GM12878 (cell line): ENCODE measurements at regions of chr1 and their contacts with region 1.

Region 1: GRCh38 chr1:78114034-78114956 is 68.5 kb downstream of the GIPC2 start:
- DNase-seq: peak; percentile 38
- ATAC-seq: peak; percentile 93
- H3K4me3 ChIP-seq: no peak overlapping the region
- H3K27ac ChIP-seq: no peak overlapping the region
- H3K4me1 ChIP-seq: peaks cover 6% of the 10 kb centered on the region
- H3K27me3 ChIP-seq: no peaks in the 10 kb centered on the region
- CTCF ChIP-seq: peak; percentile 67 to 100 (median 86); a peak in 5 of 6 replicates
- EP300 ChIP-seq: no peak
- POLR2A ChIP-seq: no peak
- RAD21 ChIP-seq: peak; percentile 99

Region 2: GRCh38 chr1:77533660-77534305 is 580.5 kb before region 1 on chr1:
- CTCF ChIA-PET with region 1: no interaction called
- POLR2A ChIA-PET with region 1: no interaction called
- RAD21 ChIA-PET with region 1: interaction called, 3 read pairs
- SMC1A ChIA-PET with region 1: interaction called, 3 read pairs
- in situ Hi-C with region 1: no loop called
- intact Hi-C with region 1: loop called (anchors 10 kb)
- DNase-seq: no peak
- ATAC-seq: peak; percentile 82
- H3K4me3 ChIP-seq: no peak overlapping the region
- H3K27ac ChIP-seq: no peak overlapping the region
- H3K4me1 ChIP-seq: peaks cover 3% of the 10 kb centered on the region; the same call in 1 of the 2 replicates
- H3K27me3 ChIP-seq: no peaks in the 10 kb centered on the region
- CTCF ChIP-seq: peak; percentile 78 to 84 (median 80)
- EP300 ChIP-seq: no peak
- POLR2A ChIP-seq: no peak
- RAD21 ChIP-seq: peak; percentile 69

Region 3: DNA sequence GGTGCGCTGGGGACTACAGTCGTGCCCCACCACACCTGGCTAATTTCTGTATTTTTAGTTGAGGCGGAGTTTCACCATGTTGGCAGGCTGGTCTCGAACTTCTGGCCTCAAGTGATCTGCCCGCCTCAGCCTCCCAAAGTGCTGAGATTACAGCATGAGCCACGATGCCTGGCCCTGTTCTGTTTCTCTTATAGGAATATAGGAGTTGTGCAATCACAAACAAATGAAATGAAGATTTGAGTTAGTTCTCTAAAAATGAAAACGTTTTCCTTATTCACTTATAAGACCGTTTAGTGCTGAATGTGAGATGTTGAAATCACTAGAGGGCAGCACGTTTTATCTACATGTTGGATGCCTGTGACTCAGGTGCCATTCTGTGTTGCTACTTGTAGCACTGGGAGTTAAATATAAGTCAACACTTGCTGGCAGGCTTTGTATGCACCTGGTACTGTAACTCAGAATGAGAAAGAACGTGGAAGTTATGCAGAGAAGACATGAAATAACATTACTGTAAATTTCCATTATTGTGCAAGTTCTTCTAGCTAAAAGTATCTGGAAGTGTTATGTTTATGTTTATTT is 289.1 kb before region 1 on chr1:
- CTCF ChIA-PET with region 1: interaction called, 40 read pairs
- POLR2A ChIA-PET with region 1: no interaction called
- RAD21 ChIA-PET with region 1: interaction called, 9 read pairs
- SMC1A ChIA-PET with region 1: interaction called, 14 read pairs
- in situ Hi-C with region 1: loop called (anchors 10 kb)
- intact Hi-C with region 1: loop called (anchors 2 kb)
- DNase-seq: peak; percentile 1
- ATAC-seq: peak; percentile 72
- H3K4me3 ChIP-seq: no peak overlapping the region
- H3K27ac ChIP-seq: no peak overlapping the region
- H3K4me1 ChIP-seq: no peaks in the 10 kb centered on the region
- H3K27me3 ChIP-seq: no peaks in the 10 kb centered on the region
- CTCF ChIP-seq: peak; percentile 11 to 39 (median 31); a peak in 4 of 6 replicates
- EP300 ChIP-seq: no peak
- POLR2A ChIP-seq: no peak
- RAD21 ChIP-seq: peak; percentile 41; the same call in 1 of the 2 replicates

Region 4: GRCh38 chr1:77978969-77979876 is 135.1 kb before region 1 on chr1 and contains the start of gene FUBP1:
- CTCF ChIA-PET with region 1: interaction called, 30 read pairs
- POLR2A ChIA-PET with region 1: no interaction called
- RAD21 ChIA-PET with region 1: interaction called, 6 read pairs
- SMC1A ChIA-PET with region 1: interaction called, 9 read pairs
- in situ Hi-C with region 1: no loop called
- intact Hi-C with region 1: loop called (anchors 2 kb)
- DNase-seq: peak; percentile 99
- ATAC-seq: peak; percentile 78
- H3K4me3 ChIP-seq: peak within 1 kb of the TSS; percentile 95
- H3K27ac ChIP-seq: peak within 1 kb of the TSS; percentile 100
- H3K4me1 ChIP-seq: no peaks in the 10 kb centered on the region; the same call in 1 of the 2 replicates
- H3K27me3 ChIP-seq: no peaks in the 10 kb centered on the region
- CTCF ChIP-seq: peak; percentile 77 to 84 (median 81)
- EP300 ChIP-seq: no peak
- POLR2A ChIP-seq: peak; percentile 96
- RAD21 ChIP-seq: peak; percentile 15; the same call in 1 of the 2 replicates
- polyA plus RNA-seq, gene FUBP1: 110 to 114 TPM

Region 5: DNA sequence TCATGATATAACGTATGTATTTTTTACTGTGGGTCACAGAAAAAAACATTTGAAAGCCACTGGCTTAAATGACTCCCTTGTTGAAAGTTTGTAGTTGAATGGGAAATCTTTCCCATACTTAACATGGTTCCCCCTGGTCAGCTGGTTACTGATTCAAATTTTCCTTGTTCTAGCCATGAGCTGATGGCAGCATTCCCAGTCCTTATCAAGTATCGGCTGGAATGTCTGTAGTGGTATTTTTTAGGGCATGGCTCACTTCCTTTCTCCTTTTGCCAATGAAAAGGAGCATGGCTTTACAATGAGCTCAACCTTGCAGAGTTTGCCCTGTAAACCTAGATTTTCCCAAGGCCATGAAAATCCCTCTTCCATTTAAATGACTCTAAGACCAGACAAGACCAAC is 12.8 kb before region 1 on chr1:
- CTCF ChIA-PET with region 1: interaction called, 20 read pairs
- POLR2A ChIA-PET with region 1: no interaction called
- RAD21 ChIA-PET with region 1: interaction called, 6 read pairs
- SMC1A ChIA-PET with region 1: interaction called, 6 read pairs
- in situ Hi-C with region 1: no loop called
- intact Hi-C with region 1: no loop called
- DNase-seq: no peak
- ATAC-seq: no peak
- H3K4me3 ChIP-seq: no peak overlapping the region
- H3K27ac ChIP-seq: no peak overlapping the region
- H3K4me1 ChIP-seq: no peaks in the 10 kb centered on the region
- H3K27me3 ChIP-seq: no peaks in the 10 kb centered on the region
- CTCF ChIP-seq: no peak
- EP300 ChIP-seq: no peak
- POLR2A ChIP-seq: no peak
- RAD21 ChIP-seq: no peak

Region 6: DNA sequence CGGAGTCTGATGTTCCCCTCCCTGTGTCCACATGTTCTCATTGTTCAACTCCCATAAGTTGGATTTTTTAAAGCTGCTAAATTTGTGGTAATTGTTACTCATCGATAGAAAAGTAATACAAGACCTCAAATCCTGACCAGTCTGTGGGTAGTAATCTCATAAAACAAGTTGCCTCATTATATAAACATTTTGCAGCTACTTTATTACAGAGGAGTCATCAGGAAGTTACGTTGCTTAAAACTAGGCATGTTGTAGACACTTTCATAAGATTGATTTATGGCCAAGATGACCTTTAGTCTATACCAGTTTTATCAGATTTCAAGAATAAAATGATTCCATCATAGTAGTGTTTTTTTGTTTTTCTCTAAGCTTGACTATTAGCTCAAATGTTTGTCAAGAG is 140.2 kb after region 1 on chr1:
- CTCF ChIA-PET with region 1: no interaction called
- POLR2A ChIA-PET with region 1: no interaction called
- RAD21 ChIA-PET with region 1: no interaction called
- SMC1A ChIA-PET with region 1: no interaction called
- in situ Hi-C with region 1: no loop called
- intact Hi-C with region 1: no loop called
- DNase-seq: no peak
- ATAC-seq: no peak
- H3K4me3 ChIP-seq: no peak overlapping the region
- H3K27ac ChIP-seq: no peak overlapping the region
- H3K4me1 ChIP-seq: no peaks in the 10 kb centered on the region
- H3K27me3 ChIP-seq: no peaks in the 10 kb centered on the region
- CTCF ChIP-seq: no peak
- EP300 ChIP-seq: no peak
- POLR2A ChIP-seq: no peak
- RAD21 ChIP-seq: no peak